ENCODE measurements at regions of chr7 and their contacts with region 1.

Region 1: DNA sequence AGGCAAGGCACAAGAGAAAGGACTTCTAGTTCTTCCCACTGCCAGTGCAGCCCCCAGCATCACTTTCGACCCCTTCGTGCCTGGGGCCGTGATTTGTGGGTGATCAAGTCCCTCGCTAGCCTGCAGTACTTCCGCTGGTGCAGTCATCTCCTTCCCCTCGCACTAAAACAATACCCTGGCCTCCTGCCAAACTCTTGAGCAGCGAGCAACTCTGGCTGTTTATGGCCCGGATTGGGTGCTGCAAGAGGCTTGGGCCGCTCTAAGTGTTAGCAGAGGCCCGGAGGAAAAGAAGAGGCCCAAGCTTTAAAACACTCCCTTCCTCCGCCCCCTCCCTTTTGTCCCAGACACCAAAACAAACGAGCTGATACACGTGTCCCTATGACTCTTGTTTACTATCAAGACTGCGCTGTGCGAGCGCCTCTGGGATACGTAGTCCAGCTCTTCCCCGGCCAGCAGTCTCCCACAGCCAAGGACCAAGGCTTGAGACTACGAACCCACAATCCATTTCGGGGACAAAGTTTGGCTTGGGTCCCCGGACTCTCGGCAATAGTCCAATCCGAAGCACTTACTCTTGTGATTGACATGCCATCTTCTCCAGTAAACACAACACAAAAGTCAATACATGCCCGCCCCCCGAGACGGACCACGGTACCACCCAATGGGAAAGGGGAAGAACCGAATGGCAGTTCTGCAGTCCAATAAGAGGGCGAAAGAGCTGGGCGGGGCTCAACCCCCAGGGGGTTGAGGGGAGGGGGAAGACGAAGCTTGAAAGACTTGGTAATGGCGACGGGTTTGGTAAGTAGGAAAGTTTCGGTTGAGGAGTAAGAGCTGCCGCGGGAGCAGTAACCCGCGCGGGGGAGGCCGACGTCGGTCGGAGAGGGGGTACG is at the start of gene HBP1:
- DNase-seq: peak; percentile 95 to 100 (median 96)
- ATAC-seq: peak; percentile 76
- H3K4me3 ChIP-seq: peak within 1 kb of the TSS; percentile 87
- H3K4me3 Mint-ChIP-seq: peak within 1 kb of the TSS; percentile 99
- H3K27ac ChIP-seq: peak within 1 kb of the TSS; percentile 98 to 99
- H3K27ac Mint-ChIP-seq: peak within 1 kb of the TSS; percentile 98
- H3K4me1 ChIP-seq: peaks cover 20% of the 10 kb centered on the region
- H3K4me1 Mint-ChIP-seq: peaks cover 51% of the 10 kb centered on the region
- H3K27me3 ChIP-seq: no peaks in the 10 kb centered on the region
- H3K27me3 Mint-ChIP-seq: no peaks in the 10 kb centered on the region
- CTCF ChIP-seq: no peak
- total RNA-seq, gene HBP1: 238 to 242 TPM

Region 2: DNA sequence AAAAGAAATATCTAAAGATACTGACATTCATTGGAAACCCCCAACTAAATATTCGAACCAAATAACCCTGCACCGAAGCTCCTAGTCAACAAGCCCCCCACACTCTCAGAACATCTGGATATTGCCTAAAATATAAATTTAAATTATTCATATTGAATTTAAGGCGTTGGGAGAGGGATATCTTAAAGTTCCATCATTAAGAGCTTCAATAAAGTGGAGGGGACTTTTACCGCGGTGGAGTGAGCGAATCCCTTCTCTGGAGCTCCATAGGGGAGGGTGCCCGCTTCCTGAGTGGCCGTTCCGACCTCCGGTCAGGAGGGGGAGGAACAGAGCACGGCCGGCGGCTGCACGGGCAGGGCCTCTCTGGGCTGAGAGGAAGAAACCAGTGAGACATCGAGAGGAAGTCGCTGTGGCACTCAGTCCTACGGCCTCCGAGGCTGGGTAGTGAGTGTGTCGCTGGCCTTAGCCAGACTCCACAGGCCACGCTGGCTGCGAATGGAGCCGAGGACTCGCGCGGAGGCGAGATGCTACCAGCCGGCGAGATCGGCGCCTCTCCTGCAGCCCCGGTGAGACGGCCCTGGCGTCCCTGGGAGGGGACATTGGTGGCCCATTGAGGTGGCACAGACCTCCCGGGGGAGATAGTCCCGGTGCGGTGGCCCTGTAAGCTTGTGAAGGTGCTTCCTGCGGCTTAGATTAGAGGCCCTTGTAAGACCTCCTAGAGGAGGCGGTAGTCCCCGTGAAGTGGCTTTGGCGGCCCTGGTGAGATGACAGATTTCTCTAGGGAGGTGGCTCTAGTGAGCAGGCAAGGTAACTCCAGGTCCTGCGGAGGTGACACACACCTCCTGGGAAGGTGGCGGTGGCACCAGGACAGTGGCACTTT is 1636.4 kb before region 1 on chr7 and contains the start of gene RINT1:
- CTCF ChIA-PET with region 1: no interaction called
- POLR2A ChIA-PET with region 1: interaction called, 12 read pairs
- intact Hi-C with region 1: no loop called
- DNase-seq: peak; percentile 78 to 94 (median 86)
- ATAC-seq: peak; percentile 88
- H3K4me3 ChIP-seq: peak within 1 kb of the TSS; percentile 82
- H3K4me3 Mint-ChIP-seq: peak within 1 kb of the TSS; percentile 94
- H3K27ac ChIP-seq: peak within 1 kb of the TSS; percentile 85 to 89
- H3K27ac Mint-ChIP-seq: peak within 1 kb of the TSS; percentile 87
- H3K4me1 ChIP-seq: peaks cover 35% of the 10 kb centered on the region
- H3K4me1 Mint-ChIP-seq: peaks cover 44% of the 10 kb centered on the region
- H3K27me3 ChIP-seq: no peaks in the 10 kb centered on the region
- H3K27me3 Mint-ChIP-seq: no peaks in the 10 kb centered on the region
- CTCF ChIP-seq: peak; percentile 71
- total RNA-seq, gene RINT1: 38.0 to 39.5 TPM

Region 3: DNA sequence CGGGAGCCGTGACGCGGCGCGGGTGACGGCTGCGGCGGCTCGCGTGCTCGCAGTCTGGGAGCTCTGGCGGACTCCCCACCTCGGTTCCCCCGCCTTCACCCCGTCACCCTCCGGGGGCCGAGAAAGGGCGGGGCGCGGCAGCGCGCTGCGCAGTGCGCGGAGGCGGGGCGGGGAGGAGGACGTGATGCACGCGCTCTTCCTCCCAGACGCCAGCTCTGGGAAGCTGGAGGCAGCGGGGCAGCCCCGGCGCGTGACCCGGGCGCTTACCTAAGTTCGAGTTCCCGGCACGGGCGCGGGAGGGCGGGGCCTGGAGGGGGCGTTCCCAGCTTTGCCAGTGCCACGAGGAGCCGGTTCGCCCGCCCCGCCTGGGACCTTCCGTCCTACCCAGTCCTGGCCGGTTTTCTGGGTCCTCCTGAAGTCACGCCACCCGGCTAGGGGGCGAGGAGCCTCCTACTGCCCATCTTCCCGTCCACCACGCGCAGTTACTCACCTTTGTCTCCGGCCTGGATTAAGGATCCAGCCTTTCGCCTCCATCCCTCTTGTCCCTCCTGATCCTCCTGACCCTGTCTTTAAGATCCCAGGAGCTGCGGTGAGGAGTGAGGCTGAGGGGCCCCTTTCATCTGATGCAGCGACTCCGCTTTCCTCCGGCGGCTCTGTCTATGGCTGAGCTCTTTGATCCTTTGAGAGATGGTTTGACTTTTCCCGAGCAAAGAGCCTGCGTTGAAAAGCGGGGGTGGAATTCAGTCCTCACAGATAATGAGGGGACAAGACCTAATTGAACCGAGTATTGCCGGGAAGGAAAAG is 883.2 kb before region 1 on chr7:
- CTCF ChIA-PET with region 1: interaction called, 3 read pairs
- POLR2A ChIA-PET with region 1: interaction called, 32 read pairs
- intact Hi-C with region 1: loop called in 1 of 2 experiments (anchors 5 kb)
- DNase-seq: peak; percentile 92 to 100 (median 97)
- ATAC-seq: peak; percentile 88
- H3K4me3 ChIP-seq: peak overlapping the region; percentile 75
- H3K4me3 Mint-ChIP-seq: peak overlapping the region; percentile 99
- H3K27ac ChIP-seq: peak overlapping the region; percentile 84 to 91
- H3K27ac Mint-ChIP-seq: peak overlapping the region; percentile 94
- H3K4me1 ChIP-seq: peaks cover 9% of the 10 kb centered on the region
- H3K4me1 Mint-ChIP-seq: peaks cover 37% of the 10 kb centered on the region
- H3K27me3 ChIP-seq: no peaks in the 10 kb centered on the region
- H3K27me3 Mint-ChIP-seq: no peaks in the 10 kb centered on the region
- CTCF ChIP-seq: no peak

Region 4: DNA sequence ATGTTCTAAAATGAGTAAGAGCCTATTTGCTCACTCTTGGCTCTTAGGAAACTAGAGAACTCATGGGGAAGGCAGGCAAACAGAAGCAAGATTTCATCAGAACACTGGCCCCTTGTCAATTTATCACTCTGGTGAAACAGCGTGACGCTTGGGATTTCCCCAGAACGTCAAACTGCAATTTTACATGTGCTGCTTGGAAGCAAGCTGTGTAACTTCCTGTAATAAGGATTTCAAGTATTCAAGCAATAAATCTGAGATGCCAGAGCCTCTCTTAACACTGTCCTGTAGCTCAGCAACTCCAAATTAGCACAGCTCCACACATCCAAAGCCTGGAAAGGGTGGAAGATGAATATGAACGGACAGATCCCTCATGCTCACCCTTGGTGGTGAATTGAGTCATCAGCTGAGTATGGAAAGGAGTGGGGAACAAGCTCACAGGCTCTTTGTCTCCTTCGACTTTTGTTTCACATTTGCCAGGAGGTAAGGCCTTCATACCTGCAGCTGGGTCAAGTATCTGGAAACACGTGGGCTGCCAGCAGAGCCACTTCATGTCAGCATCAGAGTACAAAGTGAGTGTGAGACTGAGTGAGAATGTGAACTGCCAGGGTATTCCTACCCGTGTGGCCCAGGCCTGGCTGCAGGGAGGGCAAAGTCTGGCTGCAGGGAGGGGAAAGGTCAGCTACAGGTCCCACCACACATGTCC is 743.3 kb before region 1 on chr7:
- CTCF ChIA-PET with region 1: no interaction called
- POLR2A ChIA-PET with region 1: no interaction called
- intact Hi-C with region 1: no loop called
- DNase-seq: peak in 4 of 14 experiments; percentile 5 to 81 (median 60)
- ATAC-seq: peak; percentile 52
- H3K4me3 ChIP-seq: no peak overlapping the region
- H3K4me3 Mint-ChIP-seq: no peak overlapping the region
- H3K27ac ChIP-seq: peak overlapping the region in 1 of 2 donors; percentile 58
- H3K27ac Mint-ChIP-seq: no peak overlapping the region
- H3K4me1 ChIP-seq: peaks cover 9% of the 10 kb centered on the region
- H3K4me1 Mint-ChIP-seq: peaks cover 10% of the 10 kb centered on the region
- H3K27me3 ChIP-seq: no peaks in the 10 kb centered on the region
- H3K27me3 Mint-ChIP-seq: peaks cover 8% of the 10 kb centered on the region
- CTCF ChIP-seq: no peak

Region 5: GRCh38 chr7:106865130-106866041 is 303.1 kb before region 1 on chr7 and contains the start of gene PIK3CG:
- CTCF ChIA-PET with region 1: no interaction called
- POLR2A ChIA-PET with region 1: interaction called, 51 read pairs
- intact Hi-C with region 1: loop called in 1 of 2 experiments (anchors 10 kb)
- DNase-seq: peak in 5 of 14 experiments; percentile 6 to 86 (median 75)
- ATAC-seq: peak; percentile 94
- H3K4me3 ChIP-seq: peak within 1 kb of the TSS; percentile 62
- H3K4me3 Mint-ChIP-seq: peak within 1 kb of the TSS; percentile 92
- H3K27ac ChIP-seq: peak within 1 kb of the TSS; percentile 77 to 80
- H3K27ac Mint-ChIP-seq: peak within 1 kb of the TSS; percentile 93
- H3K4me1 ChIP-seq: peaks cover 61% of the 10 kb centered on the region
- H3K4me1 Mint-ChIP-seq: peaks cover 82% of the 10 kb centered on the region
- H3K27me3 ChIP-seq: no peaks in the 10 kb centered on the region
- H3K27me3 Mint-ChIP-seq: no peaks in the 10 kb centered on the region
- CTCF ChIP-seq: no peak
- total RNA-seq, gene PIK3CG: 20.8 to 21.2 TPM

Region 6: GRCh38 chr7:107180378-107180777 is 11.9 kb after region 1 on chr7:
- CTCF ChIA-PET with region 1: interaction called, 5 read pairs
- POLR2A ChIA-PET with region 1: interaction called, 82 read pairs
- intact Hi-C with region 1: no loop called
- DNase-seq: peak in 11 of 14 experiments; percentile 23 to 84 (median 54)
- ATAC-seq: peak; percentile 56
- H3K4me3 ChIP-seq: no peak overlapping the region
- H3K4me3 Mint-ChIP-seq: no peak overlapping the region
- H3K27ac ChIP-seq: no peak overlapping the region
- H3K27ac Mint-ChIP-seq: no peak overlapping the region
- H3K4me1 ChIP-seq: peaks cover 7% of the 10 kb centered on the region
- H3K4me1 Mint-ChIP-seq: peaks cover 63% of the 10 kb centered on the region
- H3K27me3 ChIP-seq: no peaks in the 10 kb centered on the region
- H3K27me3 Mint-ChIP-seq: no peaks in the 10 kb centered on the region
- CTCF ChIP-seq: no peak

Region 7: GRCh38 chr7:107208024-107208521 is 39.6 kb after region 1 on chr7:
- CTCF ChIA-PET with region 1: interaction called, 3 read pairs
- POLR2A ChIA-PET with region 1: interaction called, 21 read pairs
- intact Hi-C with region 1: no loop called
- DNase-seq: no peak
- ATAC-seq: no peak
- H3K4me3 ChIP-seq: no peak overlapping the region
- H3K4me3 Mint-ChIP-seq: no peak overlapping the region
- H3K27ac ChIP-seq: no peak overlapping the region
- H3K27ac Mint-ChIP-seq: peak overlapping the region; percentile 12
- H3K4me1 ChIP-seq: no peaks in the 10 kb centered on the region
- H3K4me1 Mint-ChIP-seq: no peaks in the 10 kb centered on the region
- H3K27me3 ChIP-seq: no peaks in the 10 kb centered on the region
- H3K27me3 Mint-ChIP-seq: no peaks in the 10 kb centered on the region
- CTCF ChIP-seq: no peak

Region 8: DNA sequence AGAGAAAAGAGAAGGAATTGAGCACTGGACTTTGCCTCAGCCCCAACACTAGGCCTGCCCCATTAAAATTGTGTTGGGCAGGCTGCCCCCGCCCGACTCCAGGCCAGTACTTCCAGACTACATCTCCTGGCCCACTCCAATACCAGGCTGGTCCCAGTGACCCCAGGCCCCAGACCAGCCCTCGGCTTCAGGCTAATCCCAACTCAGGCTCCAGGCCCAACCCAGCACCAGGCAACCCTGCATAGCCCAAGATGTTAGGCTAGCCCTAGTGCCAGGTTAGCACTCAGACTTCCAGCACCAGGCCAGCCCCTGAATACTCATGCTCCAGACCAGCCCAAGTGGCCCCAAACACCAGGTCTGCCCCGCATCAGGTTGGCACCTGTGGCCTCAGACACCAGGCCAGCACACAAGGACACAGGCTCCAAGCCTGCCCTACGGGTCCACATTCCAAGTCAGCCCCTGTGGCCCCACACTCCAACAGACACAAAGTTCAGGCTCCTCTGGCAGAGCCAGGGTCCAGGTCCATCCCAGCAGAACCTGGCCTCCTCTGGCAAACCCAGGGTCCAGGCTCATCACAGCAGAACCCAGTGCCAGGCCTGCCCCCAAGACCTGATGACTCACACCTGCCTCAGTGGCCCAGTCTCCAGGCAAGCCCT is 375.0 kb after region 1 on chr7:
- CTCF ChIA-PET with region 1: no interaction called
- POLR2A ChIA-PET with region 1: no interaction called
- intact Hi-C with region 1: no loop called
- DNase-seq: no peak
- ATAC-seq: no peak
- H3K4me3 ChIP-seq: no peak overlapping the region
- H3K4me3 Mint-ChIP-seq: no peak overlapping the region
- H3K27ac ChIP-seq: no peak overlapping the region
- H3K27ac Mint-ChIP-seq: no peak overlapping the region
- H3K4me1 ChIP-seq: peaks cover 13% of the 10 kb centered on the region
- H3K4me1 Mint-ChIP-seq: peaks cover 28% of the 10 kb centered on the region
- H3K27me3 ChIP-seq: no peaks in the 10 kb centered on the region
- H3K27me3 Mint-ChIP-seq: no peaks in the 10 kb centered on the region
- CTCF ChIP-seq: no peak

Region 9: DNA sequence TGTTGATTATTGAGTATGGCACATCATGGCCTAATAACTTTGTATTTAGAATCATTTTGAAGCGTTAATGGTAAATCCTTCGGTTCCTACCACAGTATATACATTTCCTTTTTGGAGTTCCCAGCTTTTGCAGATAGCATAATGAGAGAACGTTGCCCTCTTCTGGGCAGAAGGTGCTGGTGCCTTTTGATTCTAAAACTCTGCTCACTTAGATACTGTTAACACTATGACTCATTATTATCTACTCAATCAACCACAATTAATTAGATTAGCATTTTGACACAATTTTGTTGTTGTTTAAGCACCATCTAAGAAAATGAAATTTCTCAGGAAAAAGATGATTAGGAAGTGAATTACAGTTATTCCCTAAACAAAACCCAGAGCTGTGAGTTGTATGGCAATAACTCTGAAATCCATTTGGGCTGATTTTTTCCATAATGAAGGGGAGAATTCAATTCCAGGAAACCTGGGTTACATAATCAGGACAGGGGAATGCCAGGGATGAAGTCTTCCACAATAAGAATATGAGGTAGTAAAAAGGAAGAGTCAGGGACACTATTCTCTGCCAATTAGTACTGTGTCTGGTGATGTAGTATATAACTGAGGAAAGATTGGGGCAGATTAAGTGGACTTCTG is 711.0 kb after region 1 on chr7:
- CTCF ChIA-PET with region 1: no interaction called
- POLR2A ChIA-PET with region 1: interaction called, 10 read pairs
- intact Hi-C with region 1: no loop called
- DNase-seq: peak in 6 of 14 experiments; percentile 9 to 79 (median 58)
- ATAC-seq: peak; percentile 74
- H3K4me3 ChIP-seq: no peak overlapping the region
- H3K4me3 Mint-ChIP-seq: no peak overlapping the region
- H3K27ac ChIP-seq: no peak overlapping the region
- H3K27ac Mint-ChIP-seq: no peak overlapping the region
- H3K4me1 ChIP-seq: peaks cover 4% of the 10 kb centered on the region
- H3K4me1 Mint-ChIP-seq: peaks cover 36% of the 10 kb centered on the region
- H3K27me3 ChIP-seq: peaks cover 0 to 5% of the 10 kb centered on the region in 2 experiments
- H3K27me3 Mint-ChIP-seq: peaks cover 18% of the 10 kb centered on the region
- CTCF ChIP-seq: peak; percentile 72